HEK293T (cell line): ENCODE measurements at regions of chr22 and their contacts with region 1.

Region 1: DNA sequence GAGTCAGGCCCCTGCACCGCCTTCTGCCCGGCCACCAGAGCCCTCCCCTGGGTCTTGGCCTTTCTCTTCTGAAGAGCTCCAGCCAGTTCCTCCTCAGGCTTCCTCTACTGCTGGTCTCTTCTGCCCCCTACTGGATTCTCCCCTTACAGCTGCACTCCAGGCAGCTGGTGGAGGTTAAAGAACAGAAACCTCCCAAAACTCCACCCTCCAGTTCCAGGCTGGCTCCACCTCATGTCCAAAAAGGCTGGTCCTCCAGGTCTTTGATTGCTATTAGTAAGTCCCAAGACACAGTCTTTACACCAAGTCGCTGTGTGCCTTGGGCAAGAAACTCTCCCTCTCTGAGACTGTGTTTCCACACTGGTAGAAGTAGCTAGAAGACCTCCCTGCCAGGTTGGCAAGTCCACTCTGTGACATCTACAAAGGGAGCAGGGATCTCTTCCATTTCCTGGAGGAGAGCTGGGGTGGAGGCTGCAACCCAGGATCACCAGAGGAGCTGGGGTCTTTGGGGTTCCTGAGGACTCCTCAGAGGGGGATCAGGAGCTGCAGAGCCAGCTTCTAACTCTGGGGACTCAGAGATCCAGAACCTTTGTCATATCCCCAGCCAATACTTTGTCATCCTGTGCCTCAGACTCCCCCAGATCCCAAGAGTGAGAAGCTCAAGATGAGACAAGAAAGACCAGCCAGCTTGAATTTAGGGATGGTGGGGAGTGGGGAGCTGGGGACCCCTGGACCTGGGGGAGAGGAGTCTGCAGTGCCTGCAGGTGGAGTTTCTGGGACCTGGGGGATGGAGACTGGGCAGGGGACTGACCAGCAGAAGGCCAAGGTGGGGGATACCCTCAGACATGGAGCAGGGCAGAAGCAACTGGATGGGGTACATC is 3.4 kb upstream of the IGLL5 start:
- DNase-seq: peak; percentile 87

Region 2: GRCh38 chr22:22753526-22754267 is 130.6 kb before region 1 on chr22:
- CTCF ChIA-PET with region 1: interaction called, 24 read pairs
- POLR2A ChIA-PET with region 1: no interaction called
- DNase-seq: peak; percentile 88

Region 3: GRCh38 chr22:22770280-22770871 is 113.9 kb before region 1 on chr22:
- CTCF ChIA-PET with region 1: interaction called, 14 read pairs
- POLR2A ChIA-PET with region 1: no interaction called
- DNase-seq: peak; percentile 72

Region 4: GRCh38 chr22:22787786-22788459 is 96.3 kb before region 1 on chr22:
- CTCF ChIA-PET with region 1: interaction called, 42 read pairs
- POLR2A ChIA-PET with region 1: no interaction called
- DNase-seq: peak; percentile 85

Region 5: GRCh38 chr22:22848364-22848866 is 35.8 kb before region 1 on chr22:
- CTCF ChIA-PET with region 1: interaction called, 14 read pairs
- POLR2A ChIA-PET with region 1: no interaction called
- DNase-seq: peak; percentile 78

Region 6: GRCh38 chr22:22855617-22856308 is 28.5 kb before region 1 on chr22:
- CTCF ChIA-PET with region 1: interaction called, 11 read pairs
- POLR2A ChIA-PET with region 1: no interaction called
- DNase-seq: peak; percentile 67